IMR-90 (cell line): ENCODE measurements at regions of chr18 and their contacts with region 1.

Region 1: DNA sequence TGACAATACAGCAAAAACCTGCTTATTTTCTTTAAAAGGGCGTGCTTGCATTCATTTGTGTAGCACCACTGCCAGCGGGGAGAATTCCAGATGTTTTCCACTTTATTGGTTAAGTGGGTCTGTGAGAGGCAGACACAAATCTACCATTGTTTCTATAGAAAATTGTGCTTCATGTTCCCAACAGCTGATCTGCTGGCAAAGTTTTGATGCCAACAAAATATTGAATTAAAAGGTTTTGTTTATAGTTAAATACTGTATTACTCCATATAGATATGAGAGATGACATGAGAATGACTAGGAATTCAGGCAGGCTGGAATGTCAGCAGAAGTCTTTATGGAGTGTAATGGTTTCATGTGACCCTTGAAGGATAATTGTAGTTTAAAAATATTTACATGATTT is 182.7 kb downstream of the MC4R start:
- DNase-seq: no peak
- ATAC-seq: no peak
- H3K4me3 ChIP-seq: no peak overlapping the region
- H3K27ac ChIP-seq: no peak overlapping the region
- H3K4me1 ChIP-seq: no peaks in the 10 kb centered on the region
- H3K27me3 ChIP-seq: no peaks in the 10 kb centered on the region; the same call in 1 of the 2 replicates
- CTCF ChIP-seq: no peak
- POLR2A ChIP-seq: no peak
- RAD21 ChIP-seq: no peak

Region 2: GRCh38 chr18:59536166-59536565 is 653.7 kb before region 1 on chr18:
- CTCF ChIA-PET with region 1: no interaction called
- POLR2A ChIA-PET with region 1: no interaction called
- dilution Hi-C with region 1: no loop called
- in situ Hi-C with region 1: no loop called
- intact Hi-C with region 1: no loop called
- DNase-seq: peak; percentile 47
- ATAC-seq: peak; percentile 60
- H3K4me3 ChIP-seq: no peak overlapping the region
- H3K27ac ChIP-seq: no peak overlapping the region
- H3K4me1 ChIP-seq: no peaks in the 10 kb centered on the region; the same call in 1 of the 2 replicates
- H3K27me3 ChIP-seq: no peaks in the 10 kb centered on the region
- CTCF ChIP-seq: no peak
- POLR2A ChIP-seq: no peak
- RAD21 ChIP-seq: no peak

Region 3: GRCh38 chr18:60007661-60008060 is 182.2 kb before region 1 on chr18:
- CTCF ChIA-PET with region 1: no interaction called
- POLR2A ChIA-PET with region 1: no interaction called
- dilution Hi-C with region 1: no loop called
- in situ Hi-C with region 1: no loop called
- intact Hi-C with region 1: loop called (anchors 5 kb)
- DNase-seq: no peak
- ATAC-seq: no peak
- H3K4me3 ChIP-seq: no peak overlapping the region
- H3K27ac ChIP-seq: no peak overlapping the region
- H3K4me1 ChIP-seq: no peaks in the 10 kb centered on the region
- H3K27me3 ChIP-seq: peaks cover 5% of the 10 kb centered on the region
- CTCF ChIP-seq: no peak
- POLR2A ChIP-seq: no peak
- RAD21 ChIP-seq: no peak